ENCODE measurements at regions of chr5 and their contacts with region 1.

Region 1: GRCh38 chr5:109347252-109347888 is 62.4 kb downstream of the PJA2 start:
- DNase-seq: peak in 1 of 35 experiments; percentile 8
- ATAC-seq: no peak
- H3K4me3 ChIP-seq: no peak overlapping the region
- H3K4me3 Mint-ChIP-seq: no peak overlapping the region
- H3K27ac ChIP-seq: no peak overlapping the region
- H3K27ac Mint-ChIP-seq: peak overlapping the region in 1 of 2 donors; percentile 64
- H3K4me1 ChIP-seq: no peaks in the 10 kb centered on the region
- H3K4me1 Mint-ChIP-seq: peaks cover 17 to 20% (median 18%) of the 10 kb centered on the region in 3 donors
- H3K27me3 ChIP-seq: no peaks in the 10 kb centered on the region
- H3K27me3 Mint-ChIP-seq: no peaks in the 10 kb centered on the region

Region 2: GRCh38 chr5:109328626-109329025 is 18.7 kb before region 1 on chr5:
- CTCF ChIA-PET with region 1: interaction called in 1 of 2 experiments, 13 read pairs
- POLR2A ChIA-PET with region 1: interaction called in 1 of 2 experiments, 3 read pairs
- DNase-seq: no peak
- ATAC-seq: no peak
- H3K4me3 ChIP-seq: no peak overlapping the region
- H3K4me3 Mint-ChIP-seq: no peak overlapping the region
- H3K27ac ChIP-seq: no peak overlapping the region
- H3K27ac Mint-ChIP-seq: peak overlapping the region in 1 of 2 donors; percentile 23
- H3K4me1 ChIP-seq: no peaks in the 10 kb centered on the region
- H3K4me1 Mint-ChIP-seq: no peaks in the 10 kb centered on the region
- H3K27me3 ChIP-seq: no peaks in the 10 kb centered on the region
- H3K27me3 Mint-ChIP-seq: no peaks in the 10 kb centered on the region

Region 3: DNA sequence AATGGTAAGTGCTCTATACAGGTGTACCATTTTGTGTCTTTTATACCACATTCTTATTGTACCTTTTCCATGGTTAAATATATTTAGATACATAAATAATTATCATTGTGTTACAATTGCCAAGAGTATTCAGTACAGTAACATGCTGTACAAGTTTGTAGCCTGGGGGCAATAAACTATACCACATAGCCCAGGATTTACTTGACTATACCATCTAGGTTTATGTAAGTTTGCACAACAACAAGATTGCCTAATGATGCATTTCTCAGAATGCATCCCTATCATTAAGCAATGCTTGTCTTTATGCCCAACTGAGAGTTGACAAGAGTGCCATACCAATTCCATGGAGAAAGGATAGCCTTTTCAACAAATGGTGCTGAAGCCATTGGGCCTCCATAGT is 199.1 kb after region 1 on chr5:
- CTCF ChIA-PET with region 1: no interaction called
- POLR2A ChIA-PET with region 1: no interaction called
- DNase-seq: no peak
- ATAC-seq: no peak
- H3K4me3 ChIP-seq: no peak overlapping the region
- H3K4me3 Mint-ChIP-seq: no peak overlapping the region
- H3K27ac ChIP-seq: no peak overlapping the region
- H3K27ac Mint-ChIP-seq: no peak overlapping the region
- H3K4me1 ChIP-seq: no peaks in the 10 kb centered on the region
- H3K4me1 Mint-ChIP-seq: no peaks in the 10 kb centered on the region
- H3K27me3 ChIP-seq: no peaks in the 10 kb centered on the region
- H3K27me3 Mint-ChIP-seq: peaks cover 0 to 10% of the 10 kb centered on the region in 2 donors

Measured in T-cell (primary cell).